Endothelial cell of umbilical vein (primary cell): ENCODE measurements at regions of chr3 and their contacts with region 1.

Region 1: DNA sequence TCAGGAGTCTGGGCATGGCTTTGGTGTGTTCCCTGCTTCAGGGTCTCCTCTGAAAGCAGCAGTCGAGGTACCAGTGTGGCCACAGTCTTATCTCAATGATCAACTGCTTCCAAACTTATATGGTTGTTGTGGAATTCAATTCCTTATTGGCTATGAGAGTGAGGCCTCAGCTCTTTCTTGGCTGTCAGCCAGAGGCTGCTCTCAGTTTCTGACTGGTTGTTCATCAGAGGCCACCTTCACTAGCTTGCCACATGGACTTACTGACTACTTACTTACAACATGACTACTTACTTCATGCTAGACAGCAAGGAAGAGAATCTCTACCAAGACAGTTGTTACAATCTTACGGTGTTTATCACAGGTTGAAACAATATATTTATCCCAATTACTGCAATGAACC is 789.2 kb downstream of the DIPK2A start:
- DNase-seq: no peak
- H3K4me3 ChIP-seq: no peak overlapping the region
- H3K27ac ChIP-seq: no peak overlapping the region
- H3K4me1 ChIP-seq: no peaks in the 10 kb centered on the region
- H3K27me3 ChIP-seq: no peaks in the 10 kb centered on the region
- CTCF ChIP-seq: no peak
- POLR2A ChIP-seq: no peak

Region 2: GRCh38 chr3:144743225-144743668 is 17.6 kb before region 1 on chr3:
- CTCF ChIA-PET with region 1: no interaction called
- POLR2A ChIA-PET with region 1: no interaction called
- dilution Hi-C with region 1: no loop called
- intact Hi-C with region 1: loop called (anchors 2 kb)
- DNase-seq: no peak
- H3K4me3 ChIP-seq: no peak overlapping the region
- H3K27ac ChIP-seq: no peak overlapping the region
- H3K4me1 ChIP-seq: no peaks in the 10 kb centered on the region
- H3K27me3 ChIP-seq: no peaks in the 10 kb centered on the region
- CTCF ChIP-seq: no peak
- POLR2A ChIP-seq: no peak

Region 3: DNA sequence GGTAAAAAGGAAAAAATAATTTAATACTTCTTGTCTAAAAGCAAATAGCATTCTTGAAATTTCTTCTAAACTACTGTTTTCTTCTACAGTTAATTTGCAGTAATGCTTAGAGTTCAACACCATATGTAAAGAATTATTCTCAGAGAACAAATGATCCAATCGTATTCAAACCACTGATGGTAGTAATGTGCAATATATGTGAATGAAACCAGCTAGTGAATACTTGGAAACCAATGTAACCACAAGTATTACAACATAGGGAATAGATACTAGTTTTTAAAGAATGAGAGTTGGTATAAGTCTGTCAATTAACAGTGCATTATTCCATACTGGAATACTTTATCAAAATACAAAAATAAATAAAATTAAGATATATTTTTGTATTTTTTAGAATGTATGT is 60.8 kb after region 1 on chr3:
- CTCF ChIA-PET with region 1: no interaction called
- POLR2A ChIA-PET with region 1: no interaction called
- dilution Hi-C with region 1: no loop called
- intact Hi-C with region 1: no loop called
- DNase-seq: no peak
- H3K4me3 ChIP-seq: no peak overlapping the region
- H3K27ac ChIP-seq: no peak overlapping the region
- H3K4me1 ChIP-seq: peaks cover 8% of the 10 kb centered on the region
- H3K27me3 ChIP-seq: no peaks in the 10 kb centered on the region
- CTCF ChIP-seq: no peak
- POLR2A ChIP-seq: no peak